Activated naive CD4-positive, alpha-beta T cell treated with anti-CD3 and anti-CD28 coated beads for 36 hours (primary cell): ENCODE measurements at regions of chr2 and their contacts with region 1.

Region 1: GRCh38 chr2:28621172-28622100 is 125.6 kb downstream of the PLB1 start:
- DNase-seq: peak; percentile 91
- H3K4me3 Mint-ChIP-seq: peak overlapping the region; percentile 41
- H3K27ac Mint-ChIP-seq: peak overlapping the region; percentile 94
- H3K4me1 Mint-ChIP-seq: peaks cover 92% of the 10 kb centered on the region
- H3K27me3 Mint-ChIP-seq: no peaks in the 10 kb centered on the region

Region 2: DNA sequence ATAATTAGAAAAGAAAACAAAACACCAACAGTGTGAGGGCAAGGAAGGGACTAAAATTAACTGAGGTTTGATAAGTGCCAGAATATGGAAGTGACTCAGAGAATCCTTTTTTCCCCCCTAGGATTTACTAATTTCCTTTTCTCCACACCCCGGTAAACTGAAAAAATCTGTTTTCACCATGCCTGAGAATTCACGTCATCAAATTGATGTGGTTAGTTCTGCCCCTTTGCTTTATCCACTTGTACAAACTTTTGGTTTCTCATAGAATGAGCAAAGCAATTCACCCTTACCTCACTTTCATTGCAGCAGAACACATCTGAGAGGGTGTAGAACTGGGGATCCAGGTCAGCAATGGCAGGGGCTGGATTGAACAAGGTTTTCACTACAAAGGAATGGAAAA is 789.0 kb before region 1 on chr2:
- CTCF ChIA-PET with region 1: no interaction called
- intact Hi-C with region 1: no loop called
- DNase-seq: no peak
- H3K4me3 Mint-ChIP-seq: no peak overlapping the region
- H3K27ac Mint-ChIP-seq: no peak overlapping the region
- H3K4me1 Mint-ChIP-seq: no peaks in the 10 kb centered on the region
- H3K27me3 Mint-ChIP-seq: no peaks in the 10 kb centered on the region

Region 3: DNA sequence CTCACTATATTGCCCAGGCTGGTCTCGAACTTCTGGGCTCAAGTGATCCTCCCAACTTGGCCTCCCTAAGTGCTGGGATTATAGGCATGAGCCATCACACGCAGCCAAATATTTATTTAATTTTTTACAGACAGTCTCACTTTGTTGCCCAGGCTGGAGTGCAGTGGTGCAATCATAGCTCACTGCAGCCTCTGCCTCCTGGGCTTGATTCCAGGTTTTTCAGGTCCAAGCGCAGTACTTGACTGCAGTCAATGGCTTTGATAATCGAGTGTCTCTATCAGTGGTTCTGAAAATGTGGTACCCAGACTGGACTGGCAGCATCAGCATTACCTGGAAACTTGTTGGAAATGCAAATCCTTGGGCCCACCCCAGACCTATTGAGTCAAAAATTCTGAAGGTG is 62.5 kb before region 1 on chr2:
- CTCF ChIA-PET with region 1: no interaction called
- intact Hi-C with region 1: no loop called
- DNase-seq: no peak
- H3K4me3 Mint-ChIP-seq: no peak overlapping the region
- H3K27ac Mint-ChIP-seq: no peak overlapping the region
- H3K4me1 Mint-ChIP-seq: no peaks in the 10 kb centered on the region
- H3K27me3 Mint-ChIP-seq: no peaks in the 10 kb centered on the region

Region 4: DNA sequence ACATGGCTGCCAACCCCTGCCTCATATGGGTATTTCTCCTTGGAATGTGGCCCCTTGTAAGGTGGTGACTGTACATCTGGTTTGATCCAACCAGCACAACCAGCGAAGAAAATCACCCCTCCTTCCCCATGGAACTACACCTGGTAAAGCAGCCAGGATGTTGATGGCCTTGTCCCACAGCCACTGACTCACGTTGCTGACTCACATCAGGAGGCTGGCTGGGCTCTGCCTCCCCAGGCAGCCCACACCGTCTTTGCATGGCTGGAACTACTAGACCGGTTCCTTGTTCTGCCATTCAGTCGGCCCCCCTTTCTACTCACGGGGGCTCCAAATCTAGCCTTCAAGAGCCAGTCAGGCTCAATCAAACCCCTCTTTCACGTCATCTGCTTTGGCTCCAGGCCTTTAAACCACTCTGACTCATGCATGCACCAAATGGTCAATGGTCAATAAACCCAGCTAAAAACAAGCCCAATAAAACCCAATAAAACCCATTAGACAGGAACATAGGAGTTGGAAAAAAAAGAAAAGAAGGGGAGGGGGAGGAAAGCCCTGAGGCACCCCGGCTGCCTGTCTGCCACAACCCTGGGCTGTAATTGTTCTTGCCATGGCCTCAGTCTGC is 10.7 kb before region 1 on chr2:
- CTCF ChIA-PET with region 1: interaction called, 9 read pairs
- intact Hi-C with region 1: loop called (anchors 1 kb)
- DNase-seq: peak; percentile 70
- H3K4me3 Mint-ChIP-seq: no peak overlapping the region
- H3K27ac Mint-ChIP-seq: peak overlapping the region; percentile 46
- H3K4me1 Mint-ChIP-seq: peaks cover 25% of the 10 kb centered on the region
- H3K27me3 Mint-ChIP-seq: no peaks in the 10 kb centered on the region

Region 5: DNA sequence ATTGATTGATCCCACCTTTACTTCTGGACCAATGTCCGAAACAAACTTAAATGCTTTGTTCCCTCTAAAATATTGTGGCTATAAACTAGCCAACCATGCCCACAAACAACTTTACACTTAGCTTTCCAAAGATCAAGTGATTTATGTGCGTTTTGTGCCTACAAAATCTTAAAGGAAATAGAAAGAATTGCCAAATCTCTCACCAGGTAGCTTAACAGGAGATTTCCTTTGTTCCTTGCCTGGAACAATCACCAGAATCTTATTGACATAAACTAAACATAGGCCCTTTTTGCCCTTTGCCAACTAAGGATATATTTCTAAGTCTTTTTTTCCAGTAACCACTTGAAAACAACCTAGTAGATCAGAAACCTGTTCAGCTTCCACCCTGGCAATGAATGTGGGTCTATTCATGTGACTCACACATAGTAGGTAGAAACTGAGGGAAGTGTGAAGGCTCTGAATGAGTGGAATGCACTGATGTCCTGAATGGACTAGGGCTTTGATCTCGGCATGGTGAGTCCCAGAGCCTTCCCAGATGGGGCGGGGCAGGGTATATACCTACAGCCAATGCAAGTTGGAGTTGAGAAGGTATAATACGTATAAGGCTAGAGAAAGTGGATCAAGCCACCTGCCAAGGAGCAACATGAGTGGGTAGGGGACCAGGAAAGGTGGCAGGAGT is 35.6 kb after region 1 on chr2:
- CTCF ChIA-PET with region 1: no interaction called
- intact Hi-C with region 1: loop called (anchors 1 kb)
- DNase-seq: peak; percentile 65
- H3K4me3 Mint-ChIP-seq: no peak overlapping the region
- H3K27ac Mint-ChIP-seq: peak overlapping the region; percentile 17
- H3K4me1 Mint-ChIP-seq: peaks cover 27% of the 10 kb centered on the region
- H3K27me3 Mint-ChIP-seq: no peaks in the 10 kb centered on the region

Region 6: DNA sequence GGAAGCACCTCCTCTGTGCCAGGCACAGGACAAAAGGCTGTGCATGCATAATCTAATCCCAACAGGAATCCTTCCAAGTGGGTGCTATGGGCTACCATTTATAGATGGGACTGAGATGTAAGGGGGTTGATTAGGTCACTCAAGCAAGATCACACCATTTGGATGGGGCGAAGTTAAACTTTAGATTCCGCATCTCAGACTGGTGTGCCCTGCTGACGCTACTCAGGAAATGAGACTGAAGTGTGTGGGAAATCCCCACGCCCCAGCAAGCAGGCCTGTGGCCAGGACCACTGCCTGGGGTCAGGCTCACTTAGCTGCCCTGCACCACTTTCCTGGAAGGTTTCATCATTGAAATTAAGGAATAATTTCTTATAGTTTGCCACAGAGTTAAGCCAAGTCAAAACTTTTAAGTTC is 59.7 kb after region 1 on chr2:
- CTCF ChIA-PET with region 1: no interaction called
- intact Hi-C with region 1: loop called (anchors 1 kb)
- DNase-seq: peak; percentile 82
- H3K4me3 Mint-ChIP-seq: peak overlapping the region; percentile 33
- H3K27ac Mint-ChIP-seq: peak overlapping the region; percentile 86
- H3K4me1 Mint-ChIP-seq: peaks cover 35% of the 10 kb centered on the region
- H3K27me3 Mint-ChIP-seq: no peaks in the 10 kb centered on the region

Region 7: DNA sequence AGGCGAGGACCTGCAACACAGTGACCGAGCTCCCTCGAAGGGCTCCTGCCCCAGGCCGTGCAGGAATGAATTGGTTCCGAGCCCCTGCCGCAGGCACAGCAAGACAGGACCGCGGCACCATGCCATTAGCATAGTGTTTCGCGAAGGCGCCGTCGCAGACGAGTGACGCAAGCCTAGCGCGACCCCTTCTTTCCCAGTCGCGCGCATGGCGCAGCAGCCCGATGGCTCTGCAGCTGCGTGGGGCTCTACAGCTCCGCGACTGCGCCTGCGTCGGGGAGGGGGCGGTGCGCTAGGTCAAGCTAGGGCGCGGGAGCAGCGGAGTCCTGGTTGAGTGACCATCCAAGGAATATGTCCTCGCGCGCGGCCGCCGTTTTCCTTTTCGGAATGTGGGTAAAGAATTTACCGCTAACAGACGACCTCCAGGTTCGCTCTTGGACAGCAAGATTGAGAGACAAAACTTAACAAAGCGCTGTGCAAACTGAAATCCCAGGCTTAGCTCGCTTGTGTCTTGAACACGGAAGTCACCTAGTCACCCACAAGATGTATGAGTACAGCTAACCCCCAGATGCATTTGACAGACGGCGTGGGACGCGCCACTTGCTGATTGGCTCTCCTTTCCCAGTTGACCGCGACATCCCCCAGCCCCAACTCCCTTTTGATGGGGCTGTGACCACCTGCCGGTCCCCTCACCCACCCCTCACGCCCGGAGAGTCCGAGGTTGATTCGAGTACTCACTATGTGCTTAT is 248.9 kb after region 1 on chr2 and contains the start of gene TRMT61B:
- CTCF ChIA-PET with region 1: no interaction called
- intact Hi-C with region 1: loop called (anchors 1 kb)
- DNase-seq: peak; percentile 97
- H3K4me3 Mint-ChIP-seq: peak within 1 kb of the TSS; percentile 89
- H3K27ac Mint-ChIP-seq: peak within 1 kb of the TSS; percentile 89
- H3K4me1 Mint-ChIP-seq: peaks cover 31% of the 10 kb centered on the region
- H3K27me3 Mint-ChIP-seq: no peaks in the 10 kb centered on the region
- total RNA-seq, gene TRMT61B: 13.6 to 15.5 TPM

Region 8: DNA sequence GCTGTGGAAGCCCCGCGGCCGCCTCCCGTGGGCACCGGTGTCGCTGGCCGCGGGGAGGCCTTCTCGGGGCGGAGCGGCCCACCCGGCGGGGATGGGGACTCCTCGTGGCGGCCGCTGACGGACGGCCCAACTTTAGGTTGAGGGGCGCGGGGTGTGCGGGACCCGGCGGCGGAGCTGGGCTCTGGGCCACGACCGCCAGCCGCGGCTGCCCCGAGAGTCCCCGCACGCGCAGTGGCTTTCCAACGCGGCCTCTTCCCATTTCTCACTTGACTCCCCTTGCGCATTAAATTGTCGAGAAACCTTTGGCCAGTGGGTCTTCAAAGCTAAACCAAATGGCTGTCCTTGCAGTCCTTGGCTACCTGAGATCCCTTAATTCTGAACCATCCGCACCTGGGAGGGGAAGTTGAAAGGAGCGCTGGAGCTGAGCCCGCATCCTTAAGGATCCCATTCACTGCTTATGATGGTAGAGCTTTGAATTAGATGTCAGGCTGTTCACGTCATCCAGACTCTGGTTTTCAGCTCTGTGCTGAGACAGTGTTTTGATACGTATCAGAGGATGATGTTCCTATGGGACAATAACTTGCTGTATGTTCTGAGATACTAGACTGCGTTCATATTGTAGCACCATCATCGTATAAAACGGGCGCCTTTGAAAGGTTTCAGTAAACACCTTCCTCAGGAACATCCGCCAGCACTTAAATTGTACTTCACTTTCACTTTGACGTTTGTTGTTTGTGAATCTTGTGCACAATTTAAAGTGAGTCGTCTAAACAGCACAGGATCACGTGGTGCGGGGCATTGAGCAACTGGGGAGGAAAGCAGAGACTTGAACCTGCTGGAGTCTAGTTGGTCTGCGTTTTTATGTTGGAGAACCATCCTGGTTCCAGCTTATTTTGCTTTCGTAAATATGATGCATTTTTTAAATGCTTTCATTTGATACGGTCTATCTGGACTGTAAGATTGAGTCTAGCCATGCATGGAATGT is 494.7 kb after region 1 on chr2:
- CTCF ChIA-PET with region 1: no interaction called
- intact Hi-C with region 1: loop called (anchors 10 kb)
- DNase-seq: peak; percentile 90
- H3K4me3 Mint-ChIP-seq: peak overlapping the region; percentile 90
- H3K27ac Mint-ChIP-seq: peak overlapping the region; percentile 87
- H3K4me1 Mint-ChIP-seq: peaks cover 52% of the 10 kb centered on the region
- H3K27me3 Mint-ChIP-seq: peaks cover 3% of the 10 kb centered on the region